OCI-LY7 (cell line): ENCODE measurements at regions of chr7 and their contacts with region 1.

Region 1: GRCh38 chr7:90155206-90155605 is 937 bp downstream of the STEAP1 start:
- DNase-seq: no peak
- H3K4me3 ChIP-seq: no peak overlapping the region
- H3K27ac ChIP-seq: no peak overlapping the region
- H3K4me1 ChIP-seq: no peaks in the 10 kb centered on the region
- CTCF ChIP-seq: no peak

Region 2: GRCh38 chr7:90222811-90223725 is 67.9 kb after region 1 on chr7:
- CTCF ChIA-PET with region 1: no interaction called
- POLR2A ChIA-PET with region 1: no interaction called
- intact Hi-C with region 1: no loop called
- DNase-seq: no peak
- H3K4me3 ChIP-seq: no peak overlapping the region
- H3K27ac ChIP-seq: no peak overlapping the region
- H3K4me1 ChIP-seq: no peaks in the 10 kb centered on the region
- CTCF ChIP-seq: no peak

Region 3: DNA sequence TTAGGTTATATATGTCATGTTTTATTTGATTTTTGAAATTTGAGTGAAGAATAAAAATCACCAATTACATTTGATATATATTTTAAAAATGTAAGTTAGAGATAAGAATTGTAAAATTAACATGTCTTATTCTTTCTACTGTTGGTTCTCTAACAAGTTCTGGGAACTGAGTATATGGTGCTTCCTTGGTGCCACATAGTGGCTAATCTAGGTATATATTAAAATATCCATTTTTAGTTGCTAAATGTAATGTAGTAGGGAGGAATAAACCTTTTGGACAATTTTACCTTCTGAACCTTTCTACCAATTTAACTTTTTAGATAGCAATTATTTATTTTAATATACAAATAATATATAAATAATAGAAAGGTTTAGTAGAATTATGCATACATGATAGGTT is 107.2 kb after region 1 on chr7:
- CTCF ChIA-PET with region 1: no interaction called
- POLR2A ChIA-PET with region 1: no interaction called
- intact Hi-C with region 1: loop called (anchors 2 kb)
- DNase-seq: peak; percentile 23
- H3K4me3 ChIP-seq: no peak overlapping the region
- H3K27ac ChIP-seq: no peak overlapping the region
- H3K4me1 ChIP-seq: no peaks in the 10 kb centered on the region
- CTCF ChIP-seq: peak; percentile 65

Region 4: DNA sequence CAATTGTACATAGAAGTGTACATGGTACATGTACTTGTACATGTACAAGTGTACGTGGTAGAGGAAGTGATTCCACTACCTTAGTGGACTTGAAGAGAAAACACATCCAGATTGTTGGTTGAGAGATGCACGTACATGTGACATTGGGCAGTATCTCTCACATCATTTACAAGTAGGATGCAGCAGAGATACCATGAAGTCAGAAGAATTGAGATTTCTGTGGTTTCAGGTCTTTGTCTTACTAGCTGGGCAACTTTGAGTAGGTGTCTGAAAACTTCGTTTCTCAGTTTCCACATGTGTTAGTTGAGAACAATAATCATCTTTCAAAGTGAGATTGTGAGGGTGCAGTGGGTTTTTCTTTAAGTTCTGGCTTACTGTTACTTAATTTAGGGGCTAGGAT is 269.5 kb after region 1 on chr7:
- CTCF ChIA-PET with region 1: no interaction called
- POLR2A ChIA-PET with region 1: no interaction called
- intact Hi-C with region 1: loop called (anchors 1 kb)
- DNase-seq: no peak
- H3K4me3 ChIP-seq: no peak overlapping the region
- H3K27ac ChIP-seq: no peak overlapping the region
- H3K4me1 ChIP-seq: no peaks in the 10 kb centered on the region
- CTCF ChIP-seq: no peak